Adrenal gland (tissue), 19 donors: ENCODE measurements at regions of chr11 and their contacts with region 1.

Region 1: GRCh38 chr11:129331871-129332274 is 43.8 kb upstream of the BARX2 start:
- DNase-seq: peak; percentile 82 to 95 (median 85)
- H3K4me3 ChIP-seq: no peak overlapping the region
- H3K27ac ChIP-seq: no peak overlapping the region
- H3K4me1 ChIP-seq: no peaks in the 10 kb centered on the region
- H3K27me3 ChIP-seq: no peaks in the 10 kb centered on the region
- CTCF ChIP-seq: peak; percentile 68 to 93 (median 88)
- POLR2A ChIP-seq: no peak

Region 2: GRCh38 chr11:129117595-129118350 is 214.1 kb before region 1 on chr11:
- intact Hi-C with region 1: loop called (anchors 5 kb)
- DNase-seq: peak; percentile 41 to 69 (median 49)
- H3K4me3 ChIP-seq: no peak overlapping the region
- H3K27ac ChIP-seq: no peak overlapping the region
- H3K4me1 ChIP-seq: peaks cover 0 to 9% of the 10 kb centered on the region in 2 donors
- H3K27me3 ChIP-seq: no peaks in the 10 kb centered on the region
- CTCF ChIP-seq: peak; percentile 67 to 97 (median 88)
- POLR2A ChIP-seq: no peak

Region 3: GRCh38 chr11:130340671-130341319 is 1008.9 kb after region 1 on chr11:
- intact Hi-C with region 1: no loop called
- DNase-seq: no peak
- H3K4me3 ChIP-seq: no peak overlapping the region
- H3K27ac ChIP-seq: no peak overlapping the region
- H3K4me1 ChIP-seq: no peaks in the 10 kb centered on the region
- H3K27me3 ChIP-seq: no peaks in the 10 kb centered on the region
- CTCF ChIP-seq: no peak
- POLR2A ChIP-seq: no peak